ENCODE measurements at regions of chr1 and their contacts with region 1.

Region 1: GRCh38 chr1:92298573-92299476 is at the starts of genes GLMN and RPAP2:
- DNase-seq: peak; percentile 45 to 87 (median 70)
- H3K4me3 ChIP-seq: peak within 1 kb of the TSS; percentile 57 to 97 (median 89)
- H3K27ac ChIP-seq: peak within 1 kb of the TSS; percentile 40 to 97 (median 89)
- H3K27me3 ChIP-seq: no peaks in the 10 kb centered on the region
- CTCF ChIP-seq: peak in 22 of 56 donors; percentile 0 to 44 (median 18)
- total RNA-seq, gene GLMN: 9.6 to 28.8 (median 19.1) TPM
- total RNA-seq, gene RPAP2: 38.1 to 72.7 (median 52.8) TPM

Region 2: DNA sequence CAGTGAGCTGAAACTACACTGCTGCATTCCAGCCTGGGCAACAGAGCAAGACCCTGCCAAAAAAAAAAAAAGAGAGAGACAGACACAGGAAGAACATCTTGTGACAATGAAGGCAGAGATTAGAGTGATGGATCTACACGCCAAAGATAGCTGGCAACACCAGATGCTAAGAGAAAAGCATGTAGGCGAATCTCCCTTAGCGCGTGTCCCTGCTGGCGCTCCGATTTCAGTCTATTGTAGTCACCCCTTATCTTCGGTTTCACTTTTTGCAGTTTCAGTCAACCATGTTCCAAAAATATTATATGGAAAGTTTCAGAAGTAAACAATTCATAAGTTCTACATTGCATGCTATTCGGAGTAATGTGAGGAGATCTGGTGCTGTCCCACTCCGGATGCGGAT is 361.2 kb before region 1 on chr1:
- intact Hi-C with region 1: loop called in 1 of 2 experiments (anchors 10 kb)
- DNase-seq: no peak
- H3K4me3 ChIP-seq: no peak overlapping the region
- H3K27ac ChIP-seq: no peak overlapping the region
- H3K27me3 ChIP-seq: no peaks in the 10 kb centered on the region
- CTCF ChIP-seq: no peak

Region 3: GRCh38 chr1:92080128-92080985 is 218.5 kb before region 1 on chr1 and contains the start of gene BTBD8:
- intact Hi-C with region 1: loop called in 1 of 2 experiments (anchors 10 kb)
- DNase-seq: peak; percentile 66 to 85 (median 80)
- H3K4me3 ChIP-seq: peak within 1 kb of the TSS; percentile 59 to 98 (median 81)
- H3K27ac ChIP-seq: peak within 1 kb of the TSS; percentile 51 to 97 (median 91)
- H3K27me3 ChIP-seq: no peaks in the 10 kb centered on the region
- CTCF ChIP-seq: peak in 33 of 56 donors; percentile 6 to 55 (median 27)
- total RNA-seq, gene BTBD8: 46.0 to 185 (median 122) TPM

Region 4: GRCh38 chr1:92154934-92155333 is 143.9 kb before region 1 on chr1:
- intact Hi-C with region 1: no loop called
- DNase-seq: no peak
- H3K4me3 ChIP-seq: no peak overlapping the region
- H3K27ac ChIP-seq: no peak overlapping the region
- H3K27me3 ChIP-seq: no peaks in the 10 kb centered on the region
- CTCF ChIP-seq: no peak

Region 5: DNA sequence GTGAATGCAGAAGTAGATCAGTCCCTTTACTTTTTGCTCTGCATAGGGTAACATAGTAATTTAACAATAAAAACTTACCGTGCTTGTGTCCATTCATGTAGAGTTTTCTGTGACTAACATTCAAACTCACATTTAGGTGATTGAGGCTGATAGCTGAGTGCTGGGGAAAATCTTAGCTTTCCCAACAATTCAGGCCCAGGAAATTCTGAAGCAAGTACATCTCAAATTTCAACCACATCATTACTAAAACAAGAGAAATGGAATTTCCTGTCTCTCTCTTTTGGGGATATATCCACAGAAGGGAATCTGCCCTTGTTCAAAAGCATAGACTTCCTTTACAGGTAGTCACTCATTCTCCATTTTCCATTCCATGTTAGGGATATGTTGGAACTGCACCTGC is 114.2 kb before region 1 on chr1:
- intact Hi-C with region 1: no loop called
- DNase-seq: no peak
- H3K4me3 ChIP-seq: no peak overlapping the region
- H3K27ac ChIP-seq: peak overlapping the region in 3 of 59 donors; percentile 19 to 32 (median 30)
- H3K27me3 ChIP-seq: no peaks in the 10 kb centered on the region
- CTCF ChIP-seq: no peak